Heart right ventricle (tissue), 16 donors: ENCODE measurements at regions of chr22 and their contacts with region 1.

Region 1: DNA sequence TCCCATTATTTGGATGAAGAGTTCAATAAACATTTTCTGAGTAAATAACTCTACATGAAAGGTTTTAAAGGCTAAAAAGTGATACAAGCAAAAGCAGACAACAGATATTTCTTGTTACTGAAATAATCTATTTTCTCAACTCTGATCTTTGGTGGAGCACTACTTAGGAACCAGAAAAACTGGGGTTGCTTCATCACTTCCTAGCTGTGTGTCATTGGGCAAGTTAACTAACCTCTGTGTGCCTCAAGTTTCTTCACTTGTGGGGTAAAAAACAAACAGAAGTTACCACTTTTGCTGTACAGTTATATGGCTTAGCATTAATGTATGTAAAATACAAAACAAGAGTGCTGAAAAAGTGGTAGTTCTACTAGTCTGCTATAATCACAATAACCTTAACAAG is 5.6 kb downstream of the MAPK1 start:
- DNase-seq: no peak
- ATAC-seq: no peak
- H3K4me3 ChIP-seq: no peak overlapping the region
- H3K27ac ChIP-seq: peak overlapping the region in 2 of 10 donors; percentile 8 to 75
- H3K4me1 ChIP-seq: peaks cover 19 to 96% (median 85%) of the 10 kb centered on the region in 9 donors
- H3K27me3 ChIP-seq: no peaks in the 10 kb centered on the region
- CTCF ChIP-seq: no peak

Region 2: GRCh38 chr22:21802056-21802455 is 59.8 kb before region 1 on chr22:
- intact Hi-C with region 1: loop called in 3 of 10 experiments (anchors 5 to 10 kb)
- DNase-seq: no peak
- ATAC-seq: no peak
- H3K4me3 ChIP-seq: no peak overlapping the region
- H3K27ac ChIP-seq: no peak overlapping the region
- H3K4me1 ChIP-seq: peaks cover 0 to 18% (median 12%) of the 10 kb centered on the region in 9 donors
- H3K27me3 ChIP-seq: no peaks in the 10 kb centered on the region
- CTCF ChIP-seq: no peak

Region 3: DNA sequence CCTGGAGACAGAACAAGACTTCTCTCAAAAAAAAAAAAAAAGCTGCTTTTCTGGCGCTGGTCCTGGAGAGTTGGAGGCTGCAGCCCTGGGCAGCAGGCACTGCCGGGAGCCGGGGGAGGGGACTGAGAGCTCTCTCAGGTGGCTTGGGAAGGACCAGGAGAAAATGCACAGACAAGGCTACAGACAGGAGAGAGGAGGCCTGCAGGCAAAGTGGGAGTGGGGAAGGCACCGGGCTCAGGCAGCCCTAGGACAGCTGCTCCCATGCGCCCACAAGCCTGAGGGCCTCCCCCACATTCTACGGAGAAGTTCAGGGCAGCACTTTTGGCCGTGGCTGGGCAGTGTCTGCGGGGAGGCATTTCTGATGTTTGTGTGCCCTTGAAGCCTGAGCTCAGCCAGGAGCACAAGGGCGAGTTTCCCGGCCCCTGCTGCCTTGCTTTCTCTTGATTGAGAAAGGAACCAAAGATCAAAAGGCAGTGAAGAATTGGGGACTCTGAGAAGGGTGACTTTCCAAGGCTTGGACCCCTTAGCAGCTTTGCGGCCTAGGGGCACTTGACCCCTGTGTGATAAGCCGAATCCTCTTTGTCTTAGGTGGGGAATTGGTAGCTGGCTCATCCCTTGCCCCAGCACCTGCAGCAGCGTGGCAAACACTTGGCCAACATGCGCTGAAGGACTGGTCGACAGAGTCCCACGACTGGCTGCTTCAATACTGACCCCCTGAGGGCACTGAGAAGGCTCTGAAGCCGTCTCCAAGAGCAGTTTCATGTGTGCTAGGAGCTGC is 55.5 kb after region 1 on chr22:
- intact Hi-C with region 1: no loop called
- DNase-seq: no peak
- ATAC-seq: peak in 6 of 8 donors; percentile 19 to 71 (median 54)
- H3K4me3 ChIP-seq: no peak overlapping the region
- H3K27ac ChIP-seq: no peak overlapping the region
- H3K4me1 ChIP-seq: peaks cover 0 to 13% (median 7%) of the 10 kb centered on the region in 9 donors
- H3K27me3 ChIP-seq: no peaks in the 10 kb centered on the region
- CTCF ChIP-seq: no peak